ENCODE measurements at regions of chr7 and their contacts with region 1.

Region 1: DNA sequence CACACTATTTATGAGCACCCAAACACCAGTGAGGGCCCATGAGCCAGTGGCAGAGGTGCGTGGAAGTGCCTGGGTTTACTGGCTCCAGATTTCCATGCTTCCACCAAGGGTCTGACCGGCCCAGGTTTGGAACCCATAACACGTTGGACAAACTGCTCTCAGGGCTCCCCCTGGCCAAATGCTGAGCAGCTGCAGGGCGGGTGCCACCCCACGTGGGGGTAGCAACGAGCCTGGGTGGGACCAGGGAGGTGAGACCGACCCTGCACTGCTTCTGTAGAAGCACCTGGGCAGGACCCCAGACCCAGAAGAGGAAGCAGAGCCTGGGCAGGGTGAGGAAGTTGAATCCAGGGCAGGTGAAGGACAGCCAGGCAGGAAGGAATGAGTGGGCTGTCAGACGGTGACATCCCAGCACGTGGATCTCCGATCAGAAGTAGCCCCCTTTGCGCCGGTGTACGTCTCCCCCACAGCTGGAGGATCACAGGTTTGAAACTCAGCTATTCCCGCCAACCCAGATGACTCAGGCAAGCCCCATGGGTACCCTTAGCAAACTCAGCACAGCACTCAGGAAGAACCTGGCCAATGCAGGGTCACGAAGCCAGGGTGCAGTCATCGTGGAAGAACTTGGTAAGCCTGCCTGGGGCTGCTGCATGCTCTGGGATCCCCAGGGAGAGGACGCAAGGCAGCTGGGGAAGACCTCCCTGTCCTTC is 100.4 kb upstream of the DDC start:
- DNase-seq: no peak
- ATAC-seq: no peak

Region 2: DNA sequence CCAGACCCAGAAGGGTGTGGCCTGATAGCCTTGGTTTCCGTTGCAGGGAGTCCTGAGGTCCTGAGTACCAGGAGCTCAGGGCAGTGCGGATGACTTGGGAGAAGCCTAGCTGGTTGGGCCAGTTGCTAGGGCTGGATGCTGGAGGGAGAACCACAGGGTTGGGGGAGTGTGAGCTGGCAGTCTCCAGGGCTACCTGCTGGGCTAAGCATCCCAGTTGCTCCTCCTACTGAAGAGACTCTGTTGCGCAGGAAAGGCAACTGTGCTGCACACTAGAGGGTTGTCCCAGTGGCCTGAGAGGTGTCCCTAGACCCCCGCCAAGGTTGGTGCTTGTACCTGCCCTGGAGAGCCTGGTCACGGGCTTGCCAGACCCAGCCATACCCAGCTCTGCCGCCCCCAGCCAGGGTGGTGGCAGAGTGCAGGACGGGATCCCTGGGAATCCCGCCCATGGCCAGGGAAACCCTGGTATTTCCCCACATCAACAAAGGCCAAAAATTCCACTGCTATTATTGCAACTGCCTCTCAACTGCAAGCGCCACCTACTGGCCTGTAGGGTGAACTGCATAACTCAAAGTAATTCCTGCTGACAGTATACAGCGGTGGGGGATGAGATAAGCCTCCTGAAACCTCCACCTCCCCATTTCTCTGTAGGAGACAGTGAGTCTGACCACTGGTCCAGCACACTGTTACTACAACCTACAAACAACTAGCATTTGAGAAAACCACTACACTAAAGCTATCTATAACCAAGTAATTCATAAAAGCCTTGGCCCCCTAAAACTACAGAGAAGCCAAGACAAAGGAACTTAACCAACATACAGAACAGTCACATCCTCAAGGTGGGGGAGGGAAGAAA is 32.8 kb before region 1 on chr7:
- intact Hi-C with region 1: loop called in 1 of 2 experiments (anchors 5 kb)
- DNase-seq: no peak
- ATAC-seq: peak; percentile 17 to 49

Region 3: GRCh38 chr7:50728184-50728583 is 62.6 kb after region 1 on chr7:
- intact Hi-C with region 1: no loop called
- DNase-seq: no peak
- ATAC-seq: peak; percentile 65 to 80

Measured in left cardiac atrium (tissue), 4 donors.